GM12878 (cell line): ENCODE measurements at regions of chr2 and their contacts with region 1.

Region 1: GRCh38 chr2:222747526-222748160 is 76.2 kb downstream of the MOGAT1 start:
- DNase-seq: no peak
- ATAC-seq: peak; percentile 72
- H3K4me3 ChIP-seq: no peak overlapping the region
- H3K27ac ChIP-seq: no peak overlapping the region
- H3K4me1 ChIP-seq: peaks cover 4% of the 10 kb centered on the region; the same call in 1 of the 2 replicates
- H3K27me3 ChIP-seq: no peaks in the 10 kb centered on the region
- CTCF ChIP-seq: no peak
- EP300 ChIP-seq: no peak
- POLR2A ChIP-seq: no peak
- RAD21 ChIP-seq: 0 out of 2 replicates have a peak, but pooled peaks have one; percentile 14

Region 2: DNA sequence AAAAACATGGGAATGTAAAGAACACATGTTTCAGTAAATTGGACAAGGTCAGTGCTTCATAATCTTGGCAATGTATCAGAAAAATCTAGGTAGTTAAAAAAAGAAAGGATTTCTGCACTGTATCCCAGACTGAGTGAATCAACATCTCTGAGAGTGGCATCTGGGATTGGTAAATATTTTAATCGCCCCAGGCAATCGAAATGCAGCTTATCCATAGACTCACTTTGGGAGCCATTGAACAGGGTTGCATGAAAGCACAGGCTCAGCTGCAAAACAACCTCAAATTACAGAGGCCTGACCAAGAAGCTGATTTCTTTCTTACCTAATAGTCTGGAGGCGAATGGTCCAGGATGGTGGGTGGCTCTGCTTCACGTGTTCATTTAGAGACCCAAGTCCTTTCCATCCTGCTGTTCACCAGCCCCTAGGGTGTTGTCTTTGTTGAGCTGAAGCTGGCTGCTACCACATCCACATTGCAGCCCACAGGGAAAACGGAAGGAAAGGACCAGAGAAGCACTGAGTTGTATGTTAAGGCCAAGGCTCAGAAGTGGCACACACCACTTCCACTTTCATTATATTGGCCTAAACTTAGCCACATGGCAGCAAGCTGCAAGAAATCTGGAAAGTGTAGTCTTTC is 17.2 kb before region 1 on chr2:
- CTCF ChIA-PET with region 1: interaction called, 4 read pairs
- POLR2A ChIA-PET with region 1: interaction called, 4 read pairs
- RAD21 ChIA-PET with region 1: no interaction called
- SMC1A ChIA-PET with region 1: interaction called, 11 read pairs
- in situ Hi-C with region 1: no loop called
- intact Hi-C with region 1: no loop called
- DNase-seq: peak; percentile 55
- ATAC-seq: peak; percentile 82
- H3K4me3 ChIP-seq: 0 out of 2 replicates have a peak overlapping the region, but pooled peaks have one; percentile 29
- H3K27ac ChIP-seq: peak overlapping the region; percentile 69
- H3K4me1 ChIP-seq: peaks cover 31% of the 10 kb centered on the region
- H3K27me3 ChIP-seq: no peaks in the 10 kb centered on the region
- CTCF ChIP-seq: no peak
- EP300 ChIP-seq: no peak
- POLR2A ChIP-seq: no peak
- RAD21 ChIP-seq: no peak